Mammary epithelial cell (primary cell): ENCODE measurements at regions of chr1 and their contacts with region 1.

Region 1: GRCh38 chr1:97668945-97669344 is 251.9 kb downstream of the DPYD start:
- DNase-seq: peak; percentile 28
- H3K4me3 ChIP-seq: no peak overlapping the region
- H3K27ac ChIP-seq: no peak overlapping the region
- H3K4me1 ChIP-seq: no peaks in the 10 kb centered on the region
- H3K27me3 ChIP-seq: no peaks in the 10 kb centered on the region
- CTCF ChIP-seq: peak in 1 of 2 donors; percentile 45

Region 2: GRCh38 chr1:96538111-96538641 is 1130.8 kb before region 1 on chr1:
- CTCF ChIA-PET with region 1: no interaction called
- dilution Hi-C with region 1: no loop called
- in situ Hi-C with region 1: no loop called
- intact Hi-C with region 1: no loop called
- DNase-seq: peak; percentile 11
- H3K4me3 ChIP-seq: no peak overlapping the region
- H3K27ac ChIP-seq: no peak overlapping the region
- H3K4me1 ChIP-seq: no peaks in the 10 kb centered on the region
- H3K27me3 ChIP-seq: no peaks in the 10 kb centered on the region
- CTCF ChIP-seq: no peak

Region 3: GRCh38 chr1:97820470-97821188 is 151.7 kb after region 1 on chr1:
- CTCF ChIA-PET with region 1: no interaction called
- dilution Hi-C with region 1: no loop called
- in situ Hi-C with region 1: no loop called
- intact Hi-C with region 1: loop called (anchors 1 kb)
- DNase-seq: peak; percentile 23
- H3K4me3 ChIP-seq: no peak overlapping the region
- H3K27ac ChIP-seq: no peak overlapping the region
- H3K4me1 ChIP-seq: no peaks in the 10 kb centered on the region
- H3K27me3 ChIP-seq: no peaks in the 10 kb centered on the region
- CTCF ChIP-seq: peak; percentile 36 to 53